Panc1 (cell line): ENCODE measurements at regions of chr10 and their contacts with region 1.

Region 1: GRCh38 chr10:71974489-71975021 is 10.4 kb downstream of the CHST3 start:
- DNase-seq: peak; percentile 45
- ATAC-seq: peak; percentile 32
- H3K4me3 ChIP-seq: no peak overlapping the region
- H3K27ac ChIP-seq: peak overlapping the region; percentile 79
- H3K4me1 ChIP-seq: peaks cover 96% of the 10 kb centered on the region
- H3K27me3 ChIP-seq: no peaks in the 10 kb centered on the region
- CTCF ChIP-seq: no peak

Region 2: GRCh38 chr10:71899665-71900412 is 74.7 kb before region 1 on chr10:
- CTCF ChIA-PET with region 1: interaction called, 11 read pairs
- POLR2A ChIA-PET with region 1: interaction called, 3 read pairs
- in situ Hi-C with region 1: no loop called
- intact Hi-C with region 1: loop called (anchors 5 kb)
- DNase-seq: no peak
- ATAC-seq: no peak
- H3K4me3 ChIP-seq: no peak overlapping the region
- H3K27ac ChIP-seq: peak overlapping the region; percentile 25
- H3K4me1 ChIP-seq: peaks cover 10% of the 10 kb centered on the region
- H3K27me3 ChIP-seq: no peaks in the 10 kb centered on the region
- CTCF ChIP-seq: no peak

Region 3: DNA sequence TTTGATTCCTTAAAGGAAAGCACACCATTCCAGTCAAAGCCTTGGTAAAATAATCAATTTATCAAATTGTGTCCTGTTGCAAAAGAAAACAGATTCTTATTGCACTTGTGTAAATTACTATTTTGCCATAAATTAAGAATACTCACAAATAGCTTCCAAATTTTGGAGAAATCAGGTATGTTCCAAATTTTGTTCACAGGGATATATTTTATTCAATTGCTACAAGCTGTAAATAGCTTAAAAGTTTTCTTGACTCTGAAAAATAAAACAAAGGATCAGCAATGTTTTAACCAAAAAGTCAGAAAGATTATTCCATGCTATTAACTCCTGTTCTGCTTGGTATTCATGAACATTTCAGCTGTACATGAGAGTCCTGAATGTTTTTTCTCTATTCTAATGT is 57.7 kb before region 1 on chr10:
- CTCF ChIA-PET with region 1: interaction called, 4 read pairs
- POLR2A ChIA-PET with region 1: no interaction called
- in situ Hi-C with region 1: no loop called
- intact Hi-C with region 1: loop called (anchors 5 kb)
- DNase-seq: no peak
- ATAC-seq: no peak
- H3K4me3 ChIP-seq: no peak overlapping the region
- H3K27ac ChIP-seq: no peak overlapping the region
- H3K4me1 ChIP-seq: peaks cover 23% of the 10 kb centered on the region
- H3K27me3 ChIP-seq: no peaks in the 10 kb centered on the region
- CTCF ChIP-seq: no peak

Region 4: GRCh38 chr10:71933651-71934050 is 40.9 kb before region 1 on chr10:
- CTCF ChIA-PET with region 1: no interaction called
- POLR2A ChIA-PET with region 1: no interaction called
- in situ Hi-C with region 1: no loop called
- intact Hi-C with region 1: no loop called
- DNase-seq: no peak
- ATAC-seq: no peak
- H3K4me3 ChIP-seq: no peak overlapping the region
- H3K27ac ChIP-seq: no peak overlapping the region
- H3K4me1 ChIP-seq: no peaks in the 10 kb centered on the region
- H3K27me3 ChIP-seq: no peaks in the 10 kb centered on the region
- CTCF ChIP-seq: no peak

Region 5: DNA sequence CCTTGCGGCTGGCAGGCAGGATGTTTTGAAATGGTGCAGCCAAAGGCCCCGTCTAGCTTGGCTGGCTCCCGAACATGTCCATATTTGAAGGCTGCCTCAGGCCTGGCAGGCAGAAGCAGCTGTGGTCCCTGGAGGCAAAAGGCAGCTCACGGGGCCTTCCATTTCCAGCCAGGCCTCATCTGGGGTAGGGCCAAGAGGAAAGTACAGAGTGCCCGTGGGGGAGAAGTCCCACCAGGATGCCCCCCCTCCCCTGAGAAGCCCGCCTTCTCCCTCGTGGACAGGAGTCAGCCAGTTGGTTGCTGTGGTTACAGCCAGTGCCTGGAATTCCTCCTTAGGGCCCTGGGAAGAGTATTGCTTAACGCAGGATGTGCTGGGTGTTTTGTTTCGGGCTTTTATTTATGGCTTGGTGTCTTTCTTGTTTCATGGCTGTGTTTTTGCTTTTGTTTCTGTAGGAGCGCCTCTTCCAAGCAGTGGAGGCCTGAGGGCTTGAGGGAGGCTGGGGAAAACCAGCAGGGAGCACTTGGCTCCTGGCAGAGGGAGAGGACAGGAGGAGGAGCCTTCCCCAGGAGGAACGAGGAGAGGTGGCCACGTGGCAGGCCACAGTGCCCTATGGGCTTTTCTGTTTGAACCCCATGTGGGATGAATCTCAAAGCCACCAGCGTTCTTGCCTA is 35.0 kb after region 1 on chr10:
- CTCF ChIA-PET with region 1: no interaction called
- POLR2A ChIA-PET with region 1: no interaction called
- in situ Hi-C with region 1: no loop called
- intact Hi-C with region 1: no loop called
- DNase-seq: no peak
- ATAC-seq: no peak
- H3K4me3 ChIP-seq: no peak overlapping the region
- H3K27ac ChIP-seq: no peak overlapping the region
- H3K4me1 ChIP-seq: no peaks in the 10 kb centered on the region
- H3K27me3 ChIP-seq: no peaks in the 10 kb centered on the region
- CTCF ChIP-seq: no peak

Region 6: DNA sequence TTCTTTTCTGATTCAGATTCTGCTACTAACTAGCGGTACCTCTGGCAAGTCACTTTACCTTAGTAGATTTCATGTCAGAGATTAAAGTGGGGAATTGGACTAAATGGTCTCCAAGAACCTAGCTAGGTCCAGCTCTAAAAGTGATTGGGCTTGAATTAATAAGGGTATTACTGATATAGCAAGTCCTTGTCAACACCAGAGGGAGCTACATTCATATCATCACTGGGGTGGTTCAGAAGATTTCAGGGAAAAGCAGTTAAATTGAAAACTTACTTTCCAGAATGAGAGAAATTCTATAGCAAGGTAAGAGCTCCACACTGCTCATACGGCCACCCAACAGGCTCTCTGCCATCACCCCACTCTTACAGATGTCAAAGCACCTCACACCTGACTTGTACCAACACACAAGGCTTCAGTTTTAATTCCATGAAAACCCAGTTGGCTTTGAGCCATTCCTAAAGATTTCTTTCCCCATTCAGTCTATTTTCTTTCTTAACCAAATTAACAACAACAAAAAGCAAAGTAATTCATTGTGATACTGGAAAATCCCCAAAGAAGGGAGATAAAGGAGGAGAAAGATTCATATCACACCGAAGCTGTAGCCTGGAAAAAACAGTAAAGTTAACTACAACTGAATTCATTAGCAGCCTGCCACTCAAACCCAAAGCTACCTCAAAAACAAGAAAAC is 151.8 kb after region 1 on chr10:
- CTCF ChIA-PET with region 1: no interaction called
- POLR2A ChIA-PET with region 1: no interaction called
- in situ Hi-C with region 1: no loop called
- intact Hi-C with region 1: no loop called
- DNase-seq: no peak
- ATAC-seq: no peak; the same call in 1 of the 2 replicates
- H3K4me3 ChIP-seq: no peak overlapping the region
- H3K27ac ChIP-seq: peak overlapping the region; percentile 63
- H3K4me1 ChIP-seq: peaks cover 43% of the 10 kb centered on the region
- H3K27me3 ChIP-seq: no peaks in the 10 kb centered on the region
- CTCF ChIP-seq: peak; percentile 66

Region 7: GRCh38 chr10:72206511-72207229 is 232.1 kb after region 1 on chr10:
- CTCF ChIA-PET with region 1: no interaction called
- POLR2A ChIA-PET with region 1: no interaction called
- in situ Hi-C with region 1: no loop called
- intact Hi-C with region 1: no loop called
- DNase-seq: no peak
- ATAC-seq: no peak
- H3K4me3 ChIP-seq: no peak overlapping the region
- H3K27ac ChIP-seq: peak overlapping the region; percentile 25; the same call in 1 of the 2 replicates
- H3K4me1 ChIP-seq: peaks cover 4% of the 10 kb centered on the region
- H3K27me3 ChIP-seq: no peaks in the 10 kb centered on the region
- CTCF ChIP-seq: no peak